Activated CD4-positive, alpha-beta memory T cell treated with anti-CD3 and anti-CD28 coated beads, Interleukin-2, amount 10 ng/mL, durations not matched to agents 7 days and 5 days (primary cell): ENCODE measurements at regions of chr5 and their contacts with region 1.

Region 1: GRCh38 chr5:141968914-141969608 is at the start of gene RNF14:
- DNase-seq: peak; percentile 96
- H3K4me3 Mint-ChIP-seq: peak within 1 kb of the TSS; percentile 93
- H3K27ac Mint-ChIP-seq: peak within 1 kb of the TSS; percentile 93
- H3K4me1 Mint-ChIP-seq: peaks cover 40% of the 10 kb centered on the region
- H3K27me3 Mint-ChIP-seq: no peaks in the 10 kb centered on the region
- total RNA-seq, gene RNF14: 32.5 to 35.7 TPM

Region 2: GRCh38 chr5:141636413-141637122 is 332.5 kb before region 1 on chr5 and contains the starts of genes HDAC3 and RELL2:
- CTCF ChIA-PET with region 1: interaction called, 8 read pairs
- POLR2A ChIA-PET with region 1: interaction called, 10 read pairs
- DNase-seq: peak; percentile 94
- H3K4me3 Mint-ChIP-seq: peak within 1 kb of the TSS; percentile 93
- H3K27ac Mint-ChIP-seq: peak within 1 kb of the TSS; percentile 80
- H3K4me1 Mint-ChIP-seq: peaks cover 59% of the 10 kb centered on the region
- H3K27me3 Mint-ChIP-seq: no peaks in the 10 kb centered on the region
- total RNA-seq, gene HDAC3: 72.0 to 77.9 TPM
- total RNA-seq, gene RELL2: 18.8 to 19.4 TPM

Region 3: GRCh38 chr5:141923448-141924352 is 45.4 kb before region 1 on chr5 and contains the start of gene DELE1:
- CTCF ChIA-PET with region 1: interaction called, 38 read pairs
- POLR2A ChIA-PET with region 1: interaction called, 39 read pairs
- DNase-seq: peak; percentile 94
- H3K4me3 Mint-ChIP-seq: peak within 1 kb of the TSS; percentile 84
- H3K27ac Mint-ChIP-seq: peak within 1 kb of the TSS; percentile 83
- H3K4me1 Mint-ChIP-seq: peaks cover 39% of the 10 kb centered on the region
- H3K27me3 Mint-ChIP-seq: no peaks in the 10 kb centered on the region
- total RNA-seq, gene DELE1: 73.4 to 80.7 TPM

Region 4: GRCh38 chr5:141986072-141986471 is 17.0 kb after region 1 on chr5:
- CTCF ChIA-PET with region 1: interaction called, 47 read pairs
- POLR2A ChIA-PET with region 1: interaction called, 15 read pairs
- DNase-seq: no peak
- H3K4me3 Mint-ChIP-seq: no peak overlapping the region
- H3K27ac Mint-ChIP-seq: no peak overlapping the region
- H3K4me1 Mint-ChIP-seq: no peaks in the 10 kb centered on the region
- H3K27me3 Mint-ChIP-seq: no peaks in the 10 kb centered on the region

Region 5: GRCh38 chr5:142024771-142025304 is 55.8 kb after region 1 on chr5:
- CTCF ChIA-PET with region 1: interaction called, 11 read pairs
- POLR2A ChIA-PET with region 1: interaction called, 7 read pairs
- DNase-seq: peak; percentile 89
- H3K4me3 Mint-ChIP-seq: peak overlapping the region; percentile 81
- H3K27ac Mint-ChIP-seq: peak overlapping the region; percentile 93
- H3K4me1 Mint-ChIP-seq: peaks cover 18% of the 10 kb centered on the region
- H3K27me3 Mint-ChIP-seq: peaks cover 2% of the 10 kb centered on the region

Region 6: GRCh38 chr5:142145106-142145900 is 176.2 kb after region 1 on chr5:
- CTCF ChIA-PET with region 1: interaction called, 23 read pairs
- POLR2A ChIA-PET with region 1: interaction called, 9 read pairs
- DNase-seq: peak; percentile 69
- H3K4me3 Mint-ChIP-seq: no peak overlapping the region
- H3K27ac Mint-ChIP-seq: no peak overlapping the region
- H3K4me1 Mint-ChIP-seq: no peaks in the 10 kb centered on the region
- H3K27me3 Mint-ChIP-seq: no peaks in the 10 kb centered on the region